Kidney (tissue), 22 donors: ENCODE measurements at regions of chr11 and their contacts with region 1.

Region 1: GRCh38 chr11:33329705-33330329 is 72.6 kb downstream of the HIPK3 start:
- DNase-seq: peak in 3 of 5 donors; percentile 44 to 72 (median 60)
- H3K4me3 ChIP-seq: no peak overlapping the region
- H3K27ac ChIP-seq: no peak overlapping the region
- H3K4me1 ChIP-seq: no peaks in the 10 kb centered on the region
- H3K27me3 ChIP-seq: no peaks in the 10 kb centered on the region
- CTCF ChIP-seq: peak; percentile 71

Region 2: GRCh38 chr11:33172996-33173395 is 156.8 kb before region 1 on chr11:
- intact Hi-C with region 1: loop called (anchors 10 kb)
- DNase-seq: no peak
- H3K4me3 ChIP-seq: no peak overlapping the region
- H3K27ac ChIP-seq: no peak overlapping the region
- H3K4me1 ChIP-seq: no peaks in the 10 kb centered on the region
- H3K27me3 ChIP-seq: no peaks in the 10 kb centered on the region
- CTCF ChIP-seq: no peak